ENCODE measurements at regions of chr6 and their contacts with region 1.

Region 1: DNA sequence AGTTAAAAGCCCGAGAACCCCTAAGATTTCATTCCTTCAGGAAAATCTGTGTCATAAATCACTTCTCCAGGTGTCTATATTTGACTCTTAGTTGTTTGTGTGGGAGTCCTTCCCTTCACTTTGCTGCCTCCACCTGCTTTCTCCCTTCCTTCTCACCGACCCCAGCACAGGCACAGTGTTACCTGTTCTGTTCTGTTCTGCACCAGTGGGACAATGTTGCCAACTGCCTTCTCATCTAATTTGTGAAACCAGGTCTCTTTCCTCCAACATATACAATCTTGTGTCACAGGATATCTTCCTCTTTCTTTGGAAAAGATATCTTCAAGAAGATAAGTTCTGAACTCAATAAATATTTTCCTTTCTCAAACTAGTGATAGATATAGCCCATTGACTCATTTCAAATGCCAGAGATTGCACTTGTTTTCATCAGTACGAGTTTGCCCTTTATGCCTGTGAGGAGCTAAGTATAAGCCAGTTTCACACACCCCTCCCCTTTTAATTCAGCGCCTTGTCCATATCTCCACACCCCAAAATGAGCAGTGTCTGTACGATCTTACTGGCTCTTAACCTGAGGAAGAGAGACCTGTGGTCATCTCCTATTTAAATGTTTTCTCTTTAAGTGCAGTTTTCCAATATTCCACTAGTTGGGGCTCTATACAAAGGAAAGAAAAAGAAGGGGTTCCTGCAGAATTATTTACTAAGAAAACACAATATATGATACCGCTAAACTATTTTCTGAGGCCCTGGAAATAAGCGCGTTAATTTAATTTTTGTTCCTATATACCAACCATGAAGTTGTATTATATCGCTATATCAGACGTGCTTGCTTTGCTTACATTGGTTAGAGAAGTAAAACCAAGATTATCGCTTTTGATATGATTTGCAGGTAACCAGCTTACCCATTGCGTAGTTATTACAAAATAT is 81.6 kb upstream of the PREP start:
- DNase-seq: no peak
- H3K4me3 ChIP-seq: no peak overlapping the region
- H3K27ac ChIP-seq: no peak overlapping the region
- H3K4me1 ChIP-seq: peaks cover 18 to 49% (median 44%) of the 10 kb centered on the region in 4 donors
- H3K27me3 ChIP-seq: no peaks in the 10 kb centered on the region
- CTCF ChIP-seq: peak; percentile 83 to 97 (median 91)
- EP300 ChIP-seq: no peak
- POLR2A ChIP-seq: no peak

Region 2: GRCh38 chr6:105151644-105152043 is 332.9 kb before region 1 on chr6:
- intact Hi-C with region 1: no loop called
- DNase-seq: no peak
- H3K4me3 ChIP-seq: no peak overlapping the region
- H3K27ac ChIP-seq: no peak overlapping the region
- H3K4me1 ChIP-seq: no peaks in the 10 kb centered on the region
- H3K27me3 ChIP-seq: no peaks in the 10 kb centered on the region
- CTCF ChIP-seq: no peak
- EP300 ChIP-seq: no peak
- POLR2A ChIP-seq: no peak

Region 3: DNA sequence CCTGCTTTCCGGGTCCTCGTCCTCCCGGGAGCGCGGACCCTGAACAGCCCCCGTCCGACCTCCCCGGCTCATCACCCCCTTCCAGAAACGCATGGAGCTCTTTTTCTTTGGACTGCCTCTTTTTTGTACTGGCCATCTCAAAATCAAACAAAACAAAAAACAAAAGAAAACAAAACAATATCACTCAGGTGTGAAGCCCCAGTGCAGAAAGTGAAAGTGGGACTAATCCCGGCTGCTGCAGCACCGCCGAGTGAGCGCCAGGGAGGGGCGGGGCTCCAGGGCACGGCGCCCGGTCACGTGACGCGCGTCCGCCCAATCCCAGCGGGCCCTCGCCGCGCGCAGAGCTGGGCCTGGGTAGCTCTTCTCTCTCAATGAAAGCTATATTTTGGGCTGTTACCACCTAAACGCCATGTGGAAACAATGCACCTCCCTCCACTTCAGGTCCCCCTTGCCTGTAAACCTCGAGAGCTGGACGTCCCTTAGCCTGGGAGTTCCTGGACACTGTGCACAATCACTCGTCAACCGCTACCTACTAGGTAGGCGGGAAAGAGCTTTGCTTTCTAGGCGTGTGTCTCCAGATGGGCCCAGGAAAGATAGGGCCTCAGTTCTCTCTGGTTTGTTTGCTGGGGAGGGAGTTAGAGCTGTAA is 507.9 kb after region 1 on chr6:
- intact Hi-C with region 1: loop called (anchors 10 kb)
- DNase-seq: no peak
- H3K4me3 ChIP-seq: peak overlapping the region; percentile 61 to 68 (median 66)
- H3K27ac ChIP-seq: peak overlapping the region in 3 of 4 donors; percentile 11 to 22 (median 22)
- H3K4me1 ChIP-seq: peaks cover 20 to 41% (median 38%) of the 10 kb centered on the region in 4 donors
- H3K27me3 ChIP-seq: peaks cover 0 to 91% (median 52%) of the 10 kb centered on the region in 4 donors
- CTCF ChIP-seq: no peak
- EP300 ChIP-seq: no peak
- POLR2A ChIP-seq: no peak

Region 4: GRCh38 chr6:106085984-106086813 is 601.7 kb after region 1 on chr6 and contains the start of gene PRDM1:
- intact Hi-C with region 1: loop called (anchors 10 kb)
- DNase-seq: peak; percentile 92
- H3K4me3 ChIP-seq: peak within 1 kb of the TSS; percentile 48 to 58 (median 53)
- H3K27ac ChIP-seq: peak within 1 kb of the TSS; percentile 21 to 60 (median 42)
- H3K4me1 ChIP-seq: peaks cover 7 to 24% (median 16%) of the 10 kb centered on the region in 4 donors
- H3K27me3 ChIP-seq: peaks cover 0 to 59% (median 3%) of the 10 kb centered on the region in 4 donors
- CTCF ChIP-seq: peak in 1 of 3 experiments; percentile 30
- EP300 ChIP-seq: no peak
- POLR2A ChIP-seq: no peak
- total RNA-seq, gene PRDM1: 1.8 to 5.1 (median 2.3) TPM

Region 5: DNA sequence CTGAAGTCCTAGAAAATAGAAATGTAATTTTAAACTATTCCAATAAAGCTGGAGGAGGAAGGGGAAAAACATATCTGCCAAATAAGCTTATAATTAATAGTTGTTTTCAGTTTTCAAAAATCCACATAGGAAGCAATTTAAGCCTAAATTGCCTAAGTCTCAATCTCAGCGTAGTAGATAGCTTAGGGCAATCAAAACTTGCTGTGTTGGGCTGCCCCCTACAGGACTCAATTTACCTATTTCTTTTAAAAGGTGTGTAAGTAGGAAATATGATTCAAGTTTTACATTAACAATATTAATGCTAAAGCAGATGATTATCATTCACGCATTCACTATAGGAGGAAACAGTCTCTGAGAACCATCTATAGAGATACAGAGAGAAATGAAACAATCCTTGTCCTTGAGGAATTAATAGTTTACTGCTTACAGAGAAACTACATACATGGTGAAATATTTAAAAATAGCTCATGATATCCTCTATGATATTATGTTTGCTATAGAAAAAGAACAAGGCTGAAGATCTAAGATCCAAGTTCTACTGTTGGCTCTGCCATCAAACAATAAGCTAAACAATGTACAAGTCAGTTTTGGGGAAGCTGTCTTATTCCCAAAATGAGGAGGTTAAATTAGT is 738.9 kb after region 1 on chr6:
- intact Hi-C with region 1: loop called (anchors 2 kb)
- DNase-seq: no peak
- H3K4me3 ChIP-seq: no peak overlapping the region
- H3K27ac ChIP-seq: no peak overlapping the region
- H3K4me1 ChIP-seq: no peaks in the 10 kb centered on the region
- H3K27me3 ChIP-seq: no peaks in the 10 kb centered on the region
- CTCF ChIP-seq: peak; percentile 57 to 61 (median 57)
- EP300 ChIP-seq: no peak
- POLR2A ChIP-seq: no peak

Region 6: DNA sequence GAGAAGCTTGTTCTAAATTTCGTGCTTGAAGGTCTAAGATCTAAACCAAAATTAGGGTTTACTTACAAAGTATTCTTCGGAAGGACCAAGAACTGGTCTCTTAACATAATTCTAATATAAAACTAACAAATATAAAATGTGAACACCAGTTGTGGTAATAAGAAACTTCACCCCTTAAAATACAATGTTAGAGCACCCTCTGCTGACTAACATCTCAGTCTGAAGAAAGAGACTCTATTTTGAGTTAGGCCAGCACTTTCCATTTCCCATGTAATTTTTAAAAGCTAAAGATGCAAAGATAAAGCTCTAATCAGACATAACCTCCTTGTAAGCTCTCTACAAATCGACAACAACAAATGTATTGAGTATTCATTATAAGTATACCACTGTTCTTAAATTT is 816.4 kb after region 1 on chr6:
- intact Hi-C with region 1: loop called (anchors 5 kb)
- DNase-seq: no peak
- H3K4me3 ChIP-seq: no peak overlapping the region
- H3K27ac ChIP-seq: no peak overlapping the region
- H3K4me1 ChIP-seq: peaks cover 0 to 10% (median 4%) of the 10 kb centered on the region in 4 donors
- H3K27me3 ChIP-seq: no peaks in the 10 kb centered on the region
- CTCF ChIP-seq: peak; percentile 46 to 50 (median 49)
- EP300 ChIP-seq: no peak
- POLR2A ChIP-seq: no peak

Measured in esophagus muscularis mucosa (tissue), 4 donors.